Endothelial cell of umbilical vein (primary cell): ENCODE measurements at regions of chr10 and their contacts with region 1.

Region 1: DNA sequence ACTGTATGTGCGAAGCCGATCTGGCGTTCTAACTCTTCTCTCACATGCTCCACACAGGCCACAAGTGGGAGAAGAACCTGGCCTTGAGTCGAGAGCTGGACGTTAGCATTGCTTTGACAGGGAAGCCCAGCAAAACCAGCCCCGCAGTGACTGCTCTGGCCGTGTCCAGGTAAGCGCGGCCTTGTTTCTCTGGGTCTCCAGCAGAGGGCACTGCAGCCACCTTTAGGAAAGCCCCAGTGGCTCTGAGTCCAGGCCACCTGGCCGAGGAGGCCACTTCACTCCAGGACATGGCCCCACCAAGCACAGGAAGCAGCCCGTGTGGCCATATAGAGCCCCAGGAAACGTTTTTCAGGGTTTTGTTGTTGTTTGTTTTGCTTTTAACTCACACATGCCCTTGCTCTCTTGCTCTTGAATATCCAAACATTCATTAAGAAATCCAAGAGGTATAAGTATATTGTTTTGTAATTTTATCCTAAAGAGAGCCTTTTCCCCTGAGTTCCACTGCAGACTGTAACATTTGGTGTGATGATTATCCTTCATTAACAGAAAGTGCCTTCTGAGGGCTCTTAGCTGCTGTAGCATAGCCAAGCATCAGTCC is 41.8 kb upstream of the LRRC18 start:
- DNase-seq: peak; percentile 27
- H3K4me3 ChIP-seq: no peak overlapping the region
- H3K27ac ChIP-seq: no peak overlapping the region
- H3K4me1 ChIP-seq: no peaks in the 10 kb centered on the region
- H3K27me3 ChIP-seq: no peaks in the 10 kb centered on the region
- CTCF ChIP-seq: peak; percentile 72 to 88
- POLR2A ChIP-seq: no peak

Region 2: GRCh38 chr10:48745662-48746245 is 235.7 kb before region 1 on chr10:
- CTCF ChIA-PET with region 1: no interaction called
- POLR2A ChIA-PET with region 1: no interaction called
- dilution Hi-C with region 1: no loop called
- intact Hi-C with region 1: no loop called
- DNase-seq: no peak
- H3K4me3 ChIP-seq: no peak overlapping the region
- H3K27ac ChIP-seq: no peak overlapping the region
- H3K4me1 ChIP-seq: no peaks in the 10 kb centered on the region
- H3K27me3 ChIP-seq: no peaks in the 10 kb centered on the region
- CTCF ChIP-seq: peak in 1 of 2 donors; percentile 3
- POLR2A ChIP-seq: no peak

Region 3: DNA sequence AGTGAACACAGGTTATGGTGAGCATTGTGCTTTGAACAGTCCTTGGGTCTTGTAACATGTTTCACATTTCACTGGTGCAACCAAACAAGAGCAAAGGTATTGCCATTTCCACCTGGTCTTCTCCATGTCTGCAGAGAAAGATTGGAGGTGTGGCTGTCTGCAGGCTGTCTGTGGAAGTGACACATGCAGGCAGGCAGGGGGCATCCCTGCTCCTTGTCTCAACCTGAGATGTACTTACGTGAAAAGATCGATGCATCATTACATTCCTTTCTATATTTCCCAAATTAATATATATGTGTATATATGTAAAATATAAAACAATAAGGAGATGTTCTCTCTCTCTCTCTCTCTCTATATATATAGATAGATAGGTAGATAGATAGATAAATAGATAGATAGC is 96.0 kb before region 1 on chr10:
- CTCF ChIA-PET with region 1: no interaction called
- POLR2A ChIA-PET with region 1: no interaction called
- dilution Hi-C with region 1: no loop called
- intact Hi-C with region 1: loop called (anchors 1 kb)
- DNase-seq: peak; percentile 43
- H3K4me3 ChIP-seq: no peak overlapping the region
- H3K27ac ChIP-seq: no peak overlapping the region
- H3K4me1 ChIP-seq: no peaks in the 10 kb centered on the region
- H3K27me3 ChIP-seq: no peaks in the 10 kb centered on the region
- CTCF ChIP-seq: peak; percentile 29 to 55
- POLR2A ChIP-seq: no peak

Region 4: GRCh38 chr10:48946891-48947500 is 34.4 kb before region 1 on chr10:
- CTCF ChIA-PET with region 1: interaction called, 4 read pairs
- POLR2A ChIA-PET with region 1: no interaction called
- dilution Hi-C with region 1: no loop called
- intact Hi-C with region 1: loop called (anchors 1 kb)
- DNase-seq: peak; percentile 91
- H3K4me3 ChIP-seq: no peak overlapping the region
- H3K27ac ChIP-seq: peak overlapping the region; percentile 74
- H3K4me1 ChIP-seq: peaks cover 32% of the 10 kb centered on the region
- H3K27me3 ChIP-seq: no peaks in the 10 kb centered on the region
- CTCF ChIP-seq: no peak
- POLR2A ChIP-seq: no peak

Region 5: GRCh38 chr10:49080071-49080470 is 98.7 kb after region 1 on chr10:
- CTCF ChIA-PET with region 1: no interaction called
- POLR2A ChIA-PET with region 1: no interaction called
- dilution Hi-C with region 1: no loop called
- intact Hi-C with region 1: no loop called
- DNase-seq: no peak
- H3K4me3 ChIP-seq: no peak overlapping the region
- H3K27ac ChIP-seq: no peak overlapping the region
- H3K4me1 ChIP-seq: no peaks in the 10 kb centered on the region
- H3K27me3 ChIP-seq: peaks cover 0 to 5% of the 10 kb centered on the region in 2 experiments
- CTCF ChIP-seq: no peak
- POLR2A ChIP-seq: no peak

Region 6: DNA sequence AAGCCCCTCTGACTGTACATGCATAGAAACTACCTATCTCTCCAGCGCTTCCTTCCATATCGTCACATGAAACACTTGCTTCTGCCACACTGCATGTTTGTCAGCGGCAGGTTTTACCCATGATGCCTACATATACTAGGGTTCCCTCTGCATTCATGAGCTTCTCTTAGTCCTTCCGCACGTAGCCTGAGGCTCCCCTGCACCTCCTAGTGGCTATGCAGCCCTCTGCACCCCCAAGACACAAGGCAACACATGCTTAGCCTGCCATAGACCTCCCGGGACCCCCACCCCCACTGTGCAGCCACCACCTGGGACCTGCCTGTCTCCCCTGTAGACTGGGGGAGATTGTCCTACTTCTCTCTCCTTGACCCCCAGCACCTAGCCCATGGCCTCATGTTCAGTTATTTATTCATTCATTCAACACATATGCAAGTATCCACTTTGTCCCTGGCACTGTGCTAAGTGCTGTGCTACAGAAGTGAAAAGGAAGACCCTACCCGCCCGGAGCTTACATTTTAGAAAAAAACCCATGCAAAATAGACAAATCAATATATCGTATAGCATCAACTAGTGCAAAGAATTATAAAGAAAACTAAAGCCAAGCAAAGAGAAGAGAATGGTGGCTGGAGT is 183.3 kb after region 1 on chr10:
- CTCF ChIA-PET with region 1: interaction called, 4 read pairs
- POLR2A ChIA-PET with region 1: no interaction called
- dilution Hi-C with region 1: no loop called
- intact Hi-C with region 1: loop called (anchors 1 kb)
- DNase-seq: peak; percentile 56
- H3K4me3 ChIP-seq: no peak overlapping the region
- H3K27ac ChIP-seq: no peak overlapping the region
- H3K4me1 ChIP-seq: no peaks in the 10 kb centered on the region
- H3K27me3 ChIP-seq: no peaks in the 10 kb centered on the region
- CTCF ChIP-seq: peak; percentile 52 to 81
- POLR2A ChIP-seq: no peak

Region 7: GRCh38 chr10:49407552-49408137 is 426.2 kb after region 1 on chr10:
- CTCF ChIA-PET with region 1: interaction called, 3 read pairs
- POLR2A ChIA-PET with region 1: no interaction called
- dilution Hi-C with region 1: no loop called
- intact Hi-C with region 1: loop called (anchors 1 kb)
- DNase-seq: peak; percentile 62
- H3K4me3 ChIP-seq: no peak overlapping the region
- H3K27ac ChIP-seq: no peak overlapping the region
- H3K4me1 ChIP-seq: no peaks in the 10 kb centered on the region
- H3K27me3 ChIP-seq: peaks cover 2 to 10% of the 10 kb centered on the region in 2 experiments
- CTCF ChIP-seq: peak; percentile 90 to 91
- POLR2A ChIP-seq: no peak